Common myeloid progenitor, CD34-positive (primary cell): ENCODE measurements at regions of chr14 and their contacts with region 1.

Region 1: DNA sequence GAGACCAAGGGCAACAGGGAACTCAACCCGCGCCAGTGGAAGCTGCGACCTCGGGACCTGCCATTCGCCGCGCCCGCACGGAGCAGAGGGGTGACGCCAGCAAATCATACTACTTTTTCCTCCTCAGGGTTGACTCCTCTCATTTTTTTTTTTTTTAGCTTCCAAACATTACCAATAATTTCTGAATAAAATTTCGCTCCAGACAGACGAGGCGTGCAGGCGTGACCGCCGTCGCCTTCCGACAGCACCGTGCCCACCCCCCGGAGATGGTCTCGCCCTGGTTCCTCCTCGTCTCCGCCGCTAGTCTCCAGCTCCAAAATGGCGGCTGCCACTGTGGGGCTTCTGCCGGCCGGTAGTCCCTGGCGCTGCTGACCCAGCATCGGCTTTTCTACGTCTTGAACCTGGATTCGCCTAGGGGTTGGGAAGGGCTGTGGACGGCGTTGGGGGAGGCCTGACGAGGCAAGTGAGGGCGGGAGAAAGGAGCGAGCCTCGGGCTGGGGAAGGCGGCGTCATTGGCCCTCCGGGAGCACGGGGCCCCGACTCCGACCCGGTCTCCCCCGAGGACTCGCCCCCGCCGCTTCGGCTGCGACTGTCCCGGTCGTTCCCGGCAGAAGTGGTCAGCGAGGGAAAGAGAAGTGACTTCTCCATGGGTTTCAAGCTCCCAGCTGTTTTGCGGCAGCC is at the starts of genes CPSF2 and NDUFB1:
- DNase-seq: peak; percentile 77 to 87 (median 84)
- H3K4me3 ChIP-seq: peak within 1 kb of the TSS; percentile 80 to 99 (median 95)
- H3K27ac ChIP-seq: peak within 1 kb of the TSS; percentile 97 to 99
- H3K4me1 ChIP-seq: peaks cover 0 to 21% (median 13%) of the 10 kb centered on the region in 4 experiments
- H3K27me3 ChIP-seq: no peaks in the 10 kb centered on the region

Region 2: GRCh38 chr14:92033906-92034687 is 87.7 kb before region 1 on chr14:
- CTCF ChIA-PET with region 1: interaction called, 3 read pairs
- POLR2A ChIA-PET with region 1: interaction called, 11 read pairs
- DNase-seq: peak in 1 of 3 donors; percentile 32
- H3K4me3 ChIP-seq: no peak overlapping the region
- H3K27ac ChIP-seq: no peak overlapping the region
- H3K4me1 ChIP-seq: peaks cover 11 to 26% (median 16%) of the 10 kb centered on the region in 4 experiments
- H3K27me3 ChIP-seq: no peaks in the 10 kb centered on the region

Region 3: GRCh38 chr14:92106143-92106926 is 15.5 kb before region 1 on chr14 and contains the start of gene ATXN3:
- CTCF ChIA-PET with region 1: interaction called, 69 read pairs
- POLR2A ChIA-PET with region 1: interaction called, 21 read pairs
- DNase-seq: peak; percentile 99
- H3K4me3 ChIP-seq: peak within 1 kb of the TSS; percentile 75 to 99 (median 97)
- H3K27ac ChIP-seq: peak within 1 kb of the TSS; percentile 92 to 94
- H3K4me1 ChIP-seq: peaks cover 9 to 30% (median 20%) of the 10 kb centered on the region in 4 experiments
- H3K27me3 ChIP-seq: no peaks in the 10 kb centered on the region

Region 4: DNA sequence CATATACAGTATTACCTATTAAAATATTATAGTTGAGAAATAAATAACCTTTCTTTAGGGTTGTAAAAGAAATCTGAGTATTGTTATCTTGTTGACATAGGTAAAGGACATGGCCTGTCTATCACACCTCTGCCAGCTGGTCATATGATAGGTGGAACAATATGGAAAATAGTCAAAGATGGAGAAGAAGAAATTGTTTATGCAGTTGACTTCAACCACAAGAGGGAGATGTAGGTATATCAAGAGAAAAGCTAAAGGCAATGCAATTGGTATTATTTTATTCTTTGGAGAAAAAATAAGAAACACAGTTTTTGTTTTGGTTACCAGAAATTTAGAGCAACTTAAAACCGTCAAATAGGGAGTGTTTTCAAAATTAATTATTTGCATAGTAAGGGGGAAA is 13.5 kb after region 1 on chr14:
- CTCF ChIA-PET with region 1: interaction called, 47 read pairs
- POLR2A ChIA-PET with region 1: interaction called, 5 read pairs
- DNase-seq: peak; percentile 47 to 69 (median 67)
- H3K4me3 ChIP-seq: no peak overlapping the region
- H3K27ac ChIP-seq: no peak overlapping the region
- H3K4me1 ChIP-seq: no peaks in the 10 kb centered on the region
- H3K27me3 ChIP-seq: no peaks in the 10 kb centered on the region